IMR-90 (cell line): ENCODE measurements at regions of chr14 and their contacts with region 1.

Region 1: DNA sequence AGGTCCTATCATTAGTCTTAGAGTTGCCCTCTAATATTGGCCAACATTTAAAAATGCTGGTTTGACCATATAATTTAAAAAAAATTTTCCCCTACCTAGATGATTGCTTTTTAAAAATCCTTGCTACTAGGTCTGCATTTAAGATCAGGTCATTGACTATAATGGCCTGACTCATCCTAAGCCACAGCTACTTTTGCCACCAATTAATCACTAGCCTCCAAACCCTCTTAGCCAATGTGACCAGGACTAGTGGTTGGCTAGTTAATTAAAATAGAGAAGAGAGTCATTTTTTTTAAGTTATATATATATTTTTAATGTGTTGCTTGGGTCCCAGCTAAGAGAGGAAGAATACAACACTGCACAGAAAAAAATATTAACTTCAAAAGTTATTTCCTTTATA is 57.5 kb downstream of the SOS2 start:
- DNase-seq: peak; percentile 4
- ATAC-seq: no peak
- H3K4me3 ChIP-seq: no peak overlapping the region
- H3K27ac ChIP-seq: no peak overlapping the region
- H3K4me1 ChIP-seq: peaks cover 2% of the 10 kb centered on the region; the same call in 1 of the 2 replicates
- H3K27me3 ChIP-seq: no peaks in the 10 kb centered on the region
- CTCF ChIP-seq: no peak
- POLR2A ChIP-seq: no peak
- RAD21 ChIP-seq: no peak

Region 2: DNA sequence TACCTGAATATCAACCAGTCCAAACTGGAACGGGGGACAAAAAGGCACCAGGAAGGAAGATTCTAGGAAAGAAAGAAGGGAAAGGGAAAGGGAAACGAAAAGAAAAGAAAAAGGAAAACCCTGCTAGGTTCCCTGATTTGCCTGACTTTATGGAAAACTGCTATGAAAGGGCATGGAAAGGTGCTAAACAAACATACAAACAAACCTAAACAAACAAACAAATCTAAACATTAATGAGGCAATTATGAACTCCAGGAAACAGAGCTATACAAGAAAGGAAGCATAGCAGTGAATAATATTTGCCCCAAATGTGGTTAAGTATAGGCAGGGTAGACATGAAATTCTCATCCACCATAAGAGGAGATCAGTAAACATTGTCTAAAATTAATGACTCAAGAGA is 45.7 kb before region 1 on chr14:
- CTCF ChIA-PET with region 1: no interaction called
- POLR2A ChIA-PET with region 1: no interaction called
- dilution Hi-C with region 1: no loop called
- in situ Hi-C with region 1: no loop called
- intact Hi-C with region 1: loop called (anchors 5 kb)
- DNase-seq: no peak
- ATAC-seq: no peak
- H3K4me3 ChIP-seq: no peak overlapping the region
- H3K27ac ChIP-seq: no peak overlapping the region
- H3K4me1 ChIP-seq: no peaks in the 10 kb centered on the region
- H3K27me3 ChIP-seq: no peaks in the 10 kb centered on the region
- CTCF ChIP-seq: no peak
- POLR2A ChIP-seq: no peak
- RAD21 ChIP-seq: no peak

Region 3: DNA sequence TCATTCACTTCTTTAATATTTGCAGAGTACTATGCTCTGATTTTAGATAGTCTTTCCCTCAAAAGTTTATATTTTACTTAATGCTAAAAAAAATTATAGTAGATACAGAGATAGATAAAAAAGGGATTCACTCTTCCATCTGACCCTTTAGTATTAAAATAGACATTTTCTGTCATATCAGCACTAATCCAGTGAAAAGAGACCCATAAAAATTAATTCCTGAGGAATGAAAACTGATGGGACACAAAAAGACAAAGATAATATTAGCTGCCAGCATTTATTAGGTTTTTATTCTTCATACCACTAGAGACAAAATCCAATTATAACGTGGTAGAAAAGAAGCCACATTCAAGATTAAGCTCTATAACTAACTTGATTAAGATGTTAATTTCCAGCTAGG is 12.2 kb after region 1 on chr14:
- CTCF ChIA-PET with region 1: interaction called, 10 read pairs
- POLR2A ChIA-PET with region 1: no interaction called
- dilution Hi-C with region 1: no loop called
- in situ Hi-C with region 1: no loop called
- intact Hi-C with region 1: no loop called
- DNase-seq: no peak
- ATAC-seq: no peak
- H3K4me3 ChIP-seq: no peak overlapping the region
- H3K27ac ChIP-seq: no peak overlapping the region
- H3K4me1 ChIP-seq: no peaks in the 10 kb centered on the region
- H3K27me3 ChIP-seq: no peaks in the 10 kb centered on the region
- CTCF ChIP-seq: no peak
- POLR2A ChIP-seq: no peak
- RAD21 ChIP-seq: no peak

Region 4: DNA sequence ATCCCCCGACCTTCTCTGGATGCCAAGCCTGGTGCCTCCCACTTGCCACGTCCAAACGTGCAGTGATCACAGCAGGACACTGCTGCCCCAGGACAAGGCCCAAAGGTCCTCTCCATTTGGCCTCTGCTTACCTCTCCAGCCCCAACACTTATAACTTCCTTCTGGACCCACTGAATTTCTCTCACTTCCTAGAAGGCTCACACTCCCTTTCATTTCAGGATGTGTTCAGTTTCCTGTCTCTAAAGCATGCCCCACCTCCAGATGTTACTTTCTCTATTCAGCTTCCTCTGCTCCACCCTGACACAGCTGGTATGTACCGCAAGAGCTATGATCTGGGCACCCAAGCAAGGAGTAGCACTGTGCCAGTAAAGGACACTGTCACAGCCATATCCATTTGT is 189.8 kb after region 1 on chr14:
- CTCF ChIA-PET with region 1: no interaction called
- POLR2A ChIA-PET with region 1: no interaction called
- dilution Hi-C with region 1: no loop called
- in situ Hi-C with region 1: no loop called
- intact Hi-C with region 1: no loop called
- DNase-seq: peak; percentile 18
- ATAC-seq: peak; percentile 76
- H3K4me3 ChIP-seq: peak overlapping the region; percentile 5; the same call in 1 of the 2 replicates
- H3K27ac ChIP-seq: peak overlapping the region; percentile 82; the same call in 1 of the 2 replicates
- H3K4me1 ChIP-seq: peaks cover 7% of the 10 kb centered on the region
- H3K27me3 ChIP-seq: no peaks in the 10 kb centered on the region
- CTCF ChIP-seq: no peak
- POLR2A ChIP-seq: no peak
- RAD21 ChIP-seq: no peak